H1 (cell line): ENCODE measurements at regions of chr4 and their contacts with region 1.

Region 1: GRCh38 chr4:143524211-143524610 is 10.7 kb downstream of the SMARCA5 start:
- DNase-seq: no peak
- H3K4me3 ChIP-seq: no peak overlapping the region
- H3K27ac ChIP-seq: no peak overlapping the region
- H3K4me1 ChIP-seq: no peaks in the 10 kb centered on the region
- H3K27me3 ChIP-seq: no peaks in the 10 kb centered on the region
- CTCF ChIP-seq: no peak
- EP300 ChIP-seq: no peak
- POLR2A ChIP-seq: no peak
- RAD21 ChIP-seq: no peak

Region 2: GRCh38 chr4:143424276-143424675 is 99.9 kb before region 1 on chr4:
- CTCF ChIA-PET with region 1: no interaction called
- POLR2A ChIA-PET with region 1: no interaction called
- DNase-seq: no peak
- H3K4me3 ChIP-seq: no peak overlapping the region
- H3K27ac ChIP-seq: no peak overlapping the region
- H3K4me1 ChIP-seq: no peaks in the 10 kb centered on the region; a peak in 1 of 7 replicates
- H3K27me3 ChIP-seq: no peaks in the 10 kb centered on the region
- CTCF ChIP-seq: no peak
- EP300 ChIP-seq: no peak
- POLR2A ChIP-seq: no peak
- RAD21 ChIP-seq: no peak

Region 3: DNA sequence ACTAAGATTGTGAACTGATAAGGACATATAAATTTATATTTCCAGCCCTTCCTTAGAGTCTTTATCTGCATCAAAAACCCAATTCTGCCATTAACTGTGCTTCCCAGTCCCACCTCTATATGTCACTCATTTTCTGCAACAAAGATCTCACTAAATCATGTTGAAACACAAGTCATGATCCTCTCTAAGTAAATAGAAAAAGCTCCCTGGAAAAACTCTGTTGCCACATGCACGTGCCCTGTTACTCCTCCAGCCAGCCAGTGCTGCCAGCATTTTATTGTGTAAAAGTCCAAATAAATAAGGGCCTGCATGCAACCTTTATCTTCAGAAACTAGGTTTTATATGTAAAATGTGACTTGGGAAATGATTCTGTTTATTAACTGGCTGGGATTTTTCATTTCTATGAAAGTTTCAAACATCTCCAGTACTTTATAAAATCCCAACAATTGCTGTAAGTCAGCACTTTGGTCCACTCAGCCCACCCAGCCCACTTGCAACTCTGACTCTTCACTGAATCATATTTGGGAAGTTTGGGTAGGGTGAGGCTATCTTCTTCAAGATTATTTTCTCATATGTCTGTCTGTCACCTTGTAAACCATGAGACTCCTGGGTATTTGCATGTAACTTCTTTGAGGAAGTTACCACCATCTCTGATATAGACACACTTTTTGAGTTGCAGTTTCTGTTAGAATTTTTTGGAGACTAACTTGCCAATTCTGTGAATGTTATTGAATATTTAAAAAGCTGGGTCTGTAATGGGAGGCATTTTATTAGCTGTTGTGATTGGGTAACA is 50.7 kb before region 1 on chr4:
- CTCF ChIA-PET with region 1: no interaction called
- POLR2A ChIA-PET with region 1: no interaction called
- DNase-seq: no peak
- H3K4me3 ChIP-seq: no peak overlapping the region
- H3K27ac ChIP-seq: no peak overlapping the region
- H3K4me1 ChIP-seq: no peaks in the 10 kb centered on the region
- H3K27me3 ChIP-seq: no peaks in the 10 kb centered on the region
- CTCF ChIP-seq: no peak
- EP300 ChIP-seq: no peak
- POLR2A ChIP-seq: no peak
- RAD21 ChIP-seq: no peak

Region 4: DNA sequence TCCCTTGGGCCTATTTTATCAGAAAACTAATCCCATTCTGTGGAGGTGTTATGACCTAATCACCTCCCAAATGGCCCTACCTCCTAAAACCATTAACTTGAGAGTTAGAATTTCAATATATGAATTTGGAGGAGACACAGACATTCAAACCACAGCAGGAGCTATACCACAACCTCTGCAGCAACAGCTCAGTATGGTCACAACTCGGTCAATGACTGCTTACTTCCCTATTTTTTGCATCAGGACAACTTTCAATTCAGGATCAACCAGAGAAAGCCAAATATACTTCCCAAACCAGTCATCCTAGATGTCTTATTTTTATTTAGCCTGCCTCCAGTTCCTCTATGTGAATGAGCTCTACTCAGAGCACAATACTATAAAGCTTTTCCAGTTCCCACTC is 22.0 kb before region 1 on chr4:
- CTCF ChIA-PET with region 1: no interaction called
- POLR2A ChIA-PET with region 1: no interaction called
- DNase-seq: no peak
- H3K4me3 ChIP-seq: no peak overlapping the region
- H3K27ac ChIP-seq: no peak overlapping the region
- H3K4me1 ChIP-seq: no peaks in the 10 kb centered on the region
- H3K27me3 ChIP-seq: no peaks in the 10 kb centered on the region
- CTCF ChIP-seq: no peak
- EP300 ChIP-seq: no peak
- POLR2A ChIP-seq: no peak
- RAD21 ChIP-seq: no peak

Region 5: DNA sequence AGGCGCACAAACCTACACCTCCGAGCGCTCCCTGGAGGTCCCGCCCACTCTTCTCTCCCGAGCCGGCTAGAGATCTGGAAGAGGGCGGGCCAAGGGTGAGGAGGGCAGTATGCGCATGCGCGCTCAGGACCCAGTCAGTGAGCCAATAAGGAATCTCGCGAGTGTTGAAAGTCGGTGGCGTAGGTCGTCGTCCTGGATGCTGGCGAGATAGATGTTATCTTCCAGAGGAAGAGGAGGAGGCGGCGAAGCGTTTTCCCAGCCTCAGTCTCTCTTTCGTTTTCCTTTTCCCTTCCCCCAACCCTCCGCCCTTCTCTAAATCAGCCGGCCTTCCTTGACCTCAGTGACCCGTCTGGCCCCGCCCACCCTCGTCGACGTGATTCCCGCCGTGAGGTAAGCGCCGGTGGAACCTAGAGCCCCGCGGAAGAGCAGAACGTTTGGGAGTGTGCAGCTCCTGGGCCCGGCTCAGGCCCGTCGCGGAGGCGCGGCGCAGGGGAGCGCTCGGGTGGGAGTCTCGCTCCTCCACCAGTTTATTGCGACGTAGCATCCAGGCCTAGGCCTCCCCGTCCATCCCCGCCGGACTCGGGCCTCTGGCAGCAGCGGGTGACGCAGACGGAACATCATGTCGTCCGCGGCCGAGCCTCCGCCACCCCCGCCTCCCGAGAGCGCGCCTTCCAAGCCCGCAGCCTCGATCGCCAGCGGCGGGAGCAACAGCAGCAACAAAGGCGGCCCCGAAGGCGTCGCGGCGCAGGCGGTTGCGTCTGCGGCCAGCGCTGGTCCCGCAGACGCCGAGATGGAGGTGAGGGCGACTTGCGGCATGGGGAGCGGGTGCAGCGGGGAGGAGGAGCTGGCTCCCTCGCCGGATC is 10.7 kb before region 1 on chr4 and contains the start of gene SMARCA5:
- CTCF ChIA-PET with region 1: no interaction called
- POLR2A ChIA-PET with region 1: interaction called, 11 read pairs
- DNase-seq: peak; percentile 89 to 95
- H3K4me3 ChIP-seq: peak within 1 kb of the TSS; percentile 93 to 98 (median 94)
- H3K27ac ChIP-seq: peak within 1 kb of the TSS; percentile 96
- H3K4me1 ChIP-seq: peaks cover 0 to 3% (median 0%) of the 10 kb centered on the region in 4 experiments; a peak in 2 of 7 replicates
- H3K27me3 ChIP-seq: no peaks in the 10 kb centered on the region
- CTCF ChIP-seq: no peak
- EP300 ChIP-seq: no peak
- POLR2A ChIP-seq: peak; percentile 92 to 95
- RAD21 ChIP-seq: no peak
- total RNA-seq, gene SMARCA5: 107 and 112 TPM in 2 replicates